ENCODE measurements at regions of chr3 and their contacts with region 1.

Region 1: DNA sequence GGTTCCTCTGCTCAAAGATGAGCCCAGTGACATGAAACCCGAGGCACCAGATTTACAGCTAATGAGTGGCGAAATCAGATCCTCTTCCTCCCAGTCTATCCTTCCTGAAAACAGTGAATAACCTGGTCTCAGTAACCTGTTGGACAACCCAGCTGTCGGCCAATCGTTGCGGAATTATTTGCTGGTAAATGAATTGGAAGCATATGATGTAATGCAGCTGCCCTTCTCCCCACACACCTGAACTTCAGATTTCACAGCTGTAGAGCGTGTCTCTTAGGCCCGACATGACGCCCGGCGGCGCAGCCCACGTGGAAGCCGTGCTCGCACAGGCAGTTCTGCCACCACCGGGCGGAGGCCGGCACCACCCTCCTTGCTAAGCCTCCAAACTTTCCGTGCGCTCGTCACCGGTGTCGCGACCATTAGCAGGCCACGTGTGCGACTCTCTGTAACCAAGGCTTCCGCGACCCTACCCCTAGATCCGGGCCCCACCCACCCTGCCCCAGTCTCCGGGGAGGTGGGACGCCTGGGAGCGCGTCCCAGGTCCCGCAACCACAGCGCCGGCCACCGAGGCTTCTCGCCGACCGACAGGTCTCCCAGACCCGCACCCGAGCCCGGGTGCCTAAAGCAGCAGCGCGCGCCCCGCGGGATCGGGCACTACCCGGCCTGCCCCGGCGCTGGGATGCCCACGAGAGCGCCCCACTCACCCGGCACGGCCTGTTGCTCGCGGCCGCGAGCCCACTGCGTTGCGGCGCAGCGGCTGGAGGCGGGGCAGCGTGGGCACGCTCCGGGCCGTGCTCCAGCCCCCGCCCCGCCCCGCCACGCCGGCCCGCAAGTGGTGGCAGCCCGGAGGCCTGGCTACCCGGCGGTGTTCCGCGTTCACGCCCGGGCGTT is at the start of gene RIOX2:
- DNase-seq: peak; percentile 86
- H3K4me3 Mint-ChIP-seq: peak within 1 kb of the TSS; percentile 93
- H3K27ac Mint-ChIP-seq: peak within 1 kb of the TSS; percentile 94
- H3K4me1 Mint-ChIP-seq: peaks cover 52% of the 10 kb centered on the region
- H3K27me3 Mint-ChIP-seq: no peaks in the 10 kb centered on the region
- total RNA-seq, gene RIOX2: 35.9 to 36.1 TPM

Region 2: DNA sequence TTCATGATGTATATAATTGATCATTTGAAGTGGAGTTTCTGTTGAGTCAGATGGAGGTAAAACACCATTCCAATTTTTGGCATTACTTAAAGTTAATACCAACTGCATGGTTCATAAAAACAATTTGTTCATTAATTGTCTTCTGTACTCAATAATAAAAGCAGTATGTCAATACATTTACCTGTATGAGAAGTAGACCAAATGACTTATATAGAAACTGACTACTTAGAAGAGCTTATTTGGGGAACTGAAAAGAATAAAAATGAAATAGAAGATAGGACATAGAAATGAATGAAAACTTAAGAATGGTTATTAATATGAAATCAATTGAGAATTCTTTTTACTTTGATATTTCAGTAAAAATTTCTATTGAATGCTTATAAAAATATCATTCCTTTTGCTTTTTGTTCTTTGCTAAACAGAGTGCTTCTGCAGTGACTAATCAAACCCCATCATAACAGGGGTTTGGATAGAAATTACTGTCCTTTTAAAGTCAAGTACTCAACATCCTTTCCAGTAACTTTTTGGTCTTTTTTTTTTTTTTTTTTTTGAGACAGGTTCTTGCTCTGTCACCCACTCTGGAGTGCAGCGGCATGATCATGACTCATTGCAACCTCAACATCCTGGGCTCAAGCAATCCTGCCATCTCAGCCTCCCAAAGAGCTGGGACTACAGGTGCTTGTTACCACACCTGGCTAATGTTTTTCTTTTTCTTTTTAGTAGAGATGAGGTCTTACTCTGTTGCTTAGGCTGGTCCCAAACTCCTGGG is 156.6 kb before region 1 on chr3:
- CTCF ChIA-PET with region 1: interaction called, 3 read pairs
- POLR2A ChIA-PET with region 1: no interaction called
- intact Hi-C with region 1: loop called (anchors 2 kb)
- DNase-seq: peak; percentile 73
- H3K4me3 Mint-ChIP-seq: no peak overlapping the region
- H3K27ac Mint-ChIP-seq: peak overlapping the region; percentile 65
- H3K4me1 Mint-ChIP-seq: peaks cover 15% of the 10 kb centered on the region
- H3K27me3 Mint-ChIP-seq: no peaks in the 10 kb centered on the region

Region 3: DNA sequence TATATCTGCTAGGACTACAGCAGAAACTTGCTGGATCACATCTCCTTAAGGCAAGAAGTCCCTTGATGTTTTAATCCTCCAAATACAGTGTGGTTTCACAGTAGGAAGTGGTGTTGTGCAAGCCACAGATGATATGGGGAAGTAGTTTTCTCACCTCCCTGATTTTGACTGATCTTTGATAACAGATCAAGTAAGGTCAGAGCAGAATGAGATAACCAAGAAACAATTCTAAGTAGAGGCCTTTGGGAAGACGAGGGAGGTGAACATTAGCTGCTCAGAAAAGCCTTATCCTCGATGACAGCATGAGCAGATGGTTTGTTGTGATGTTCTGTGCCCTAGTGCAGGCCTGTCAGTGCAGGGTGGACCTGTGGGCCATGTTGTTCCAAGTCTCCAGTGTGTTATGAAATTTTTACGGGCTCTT is 61.0 kb before region 1 on chr3:
- CTCF ChIA-PET with region 1: no interaction called
- POLR2A ChIA-PET with region 1: no interaction called
- intact Hi-C with region 1: loop called (anchors 5 kb)
- DNase-seq: no peak
- H3K4me3 Mint-ChIP-seq: peak overlapping the region; percentile 77
- H3K27ac Mint-ChIP-seq: peak overlapping the region; percentile 88
- H3K4me1 Mint-ChIP-seq: peaks cover 28% of the 10 kb centered on the region
- H3K27me3 Mint-ChIP-seq: no peaks in the 10 kb centered on the region

Region 4: GRCh38 chr3:97956051-97956450 is 15.9 kb before region 1 on chr3:
- CTCF ChIA-PET with region 1: interaction called, 3 read pairs
- POLR2A ChIA-PET with region 1: no interaction called
- intact Hi-C with region 1: loop called (anchors 1 kb)
- DNase-seq: no peak
- H3K4me3 Mint-ChIP-seq: no peak overlapping the region
- H3K27ac Mint-ChIP-seq: no peak overlapping the region
- H3K4me1 Mint-ChIP-seq: no peaks in the 10 kb centered on the region
- H3K27me3 Mint-ChIP-seq: no peaks in the 10 kb centered on the region

Region 5: DNA sequence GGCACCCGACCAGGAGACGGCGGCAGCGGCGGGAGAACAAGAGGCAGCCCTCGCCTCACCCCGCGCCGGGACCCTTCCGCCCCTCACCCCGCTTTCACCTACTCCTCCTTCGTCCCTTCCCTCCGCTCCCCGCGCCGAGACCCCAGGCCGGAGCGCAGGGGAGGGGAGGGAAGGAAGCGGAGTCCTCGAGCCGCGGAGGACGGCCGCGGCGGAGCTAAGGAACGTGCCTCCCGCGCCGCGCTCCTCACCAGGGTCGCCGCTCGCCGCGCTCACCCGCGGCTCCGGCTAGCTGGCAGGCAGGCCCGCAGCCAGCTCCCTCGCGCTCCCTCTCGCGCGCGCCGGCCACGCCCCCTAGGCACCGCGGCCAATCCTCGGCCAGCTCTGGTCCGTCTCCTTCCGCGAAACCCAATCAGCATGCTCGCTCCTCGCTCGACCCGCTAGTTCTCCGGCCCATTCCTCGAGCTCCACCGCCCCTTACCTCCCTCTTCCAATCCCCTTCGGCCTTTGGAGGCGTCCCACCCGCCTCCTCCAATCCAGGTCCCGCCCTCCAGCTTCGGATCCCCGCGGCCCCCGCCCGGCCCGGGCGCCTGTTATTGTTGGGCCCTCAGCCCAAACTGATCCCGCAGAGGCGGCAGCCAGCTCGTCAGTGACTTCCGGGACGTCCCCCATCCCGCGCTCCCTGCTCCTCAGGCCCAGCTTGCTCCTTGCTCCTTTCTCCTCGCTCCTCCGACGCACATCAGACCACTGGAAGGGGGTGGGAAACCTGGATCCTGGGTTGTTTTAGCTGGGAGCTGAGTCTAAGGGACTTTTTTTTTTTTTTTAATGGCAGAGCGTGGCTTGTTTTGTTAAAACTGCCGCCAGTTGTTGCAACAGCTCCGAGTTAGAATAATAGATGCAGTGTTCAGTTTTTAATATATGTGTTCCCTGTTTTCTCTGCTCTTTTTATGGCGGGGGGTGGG is 929.7 kb after region 1 on chr3 and contains the start of gene DCBLD2:
- CTCF ChIA-PET with region 1: no interaction called
- POLR2A ChIA-PET with region 1: no interaction called
- intact Hi-C with region 1: loop called (anchors 1 kb)
- DNase-seq: peak; percentile 95
- H3K4me3 Mint-ChIP-seq: peak within 1 kb of the TSS; percentile 78
- H3K27ac Mint-ChIP-seq: no peak within 1 kb of the TSS
- H3K4me1 Mint-ChIP-seq: peaks cover 11% of the 10 kb centered on the region
- H3K27me3 Mint-ChIP-seq: peaks cover 5% of the 10 kb centered on the region
- total RNA-seq, gene DCBLD2: 1.2 to 1.6 TPM

Measured in activated CD4-positive, alpha-beta memory T cell treated with anti-CD3 and anti-CD28 coated beads for 36 hours (primary cell).